HCT116 (cell line): ENCODE measurements at regions of chr1 and their contacts with region 1.

Region 1: GRCh38 chr1:241611063-241611462 is 29.1 kb downstream of the CHML start:
- DNase-seq: peak; percentile 56
- ATAC-seq: peak; percentile 91
- H3K4me3 ChIP-seq: no peak overlapping the region
- H3K27ac ChIP-seq: no peak overlapping the region
- H3K4me1 ChIP-seq: peaks cover 0 to 8% of the 10 kb centered on the region in 2 experiments; a peak in 1 of 4 replicates
- H3K27me3 ChIP-seq: no peaks in the 10 kb centered on the region
- CTCF ChIP-seq: peak; percentile 42 to 77 (median 74)
- POLR2A ChIP-seq: no peak
- RAD21 ChIP-seq: peak; percentile 89

Region 2: DNA sequence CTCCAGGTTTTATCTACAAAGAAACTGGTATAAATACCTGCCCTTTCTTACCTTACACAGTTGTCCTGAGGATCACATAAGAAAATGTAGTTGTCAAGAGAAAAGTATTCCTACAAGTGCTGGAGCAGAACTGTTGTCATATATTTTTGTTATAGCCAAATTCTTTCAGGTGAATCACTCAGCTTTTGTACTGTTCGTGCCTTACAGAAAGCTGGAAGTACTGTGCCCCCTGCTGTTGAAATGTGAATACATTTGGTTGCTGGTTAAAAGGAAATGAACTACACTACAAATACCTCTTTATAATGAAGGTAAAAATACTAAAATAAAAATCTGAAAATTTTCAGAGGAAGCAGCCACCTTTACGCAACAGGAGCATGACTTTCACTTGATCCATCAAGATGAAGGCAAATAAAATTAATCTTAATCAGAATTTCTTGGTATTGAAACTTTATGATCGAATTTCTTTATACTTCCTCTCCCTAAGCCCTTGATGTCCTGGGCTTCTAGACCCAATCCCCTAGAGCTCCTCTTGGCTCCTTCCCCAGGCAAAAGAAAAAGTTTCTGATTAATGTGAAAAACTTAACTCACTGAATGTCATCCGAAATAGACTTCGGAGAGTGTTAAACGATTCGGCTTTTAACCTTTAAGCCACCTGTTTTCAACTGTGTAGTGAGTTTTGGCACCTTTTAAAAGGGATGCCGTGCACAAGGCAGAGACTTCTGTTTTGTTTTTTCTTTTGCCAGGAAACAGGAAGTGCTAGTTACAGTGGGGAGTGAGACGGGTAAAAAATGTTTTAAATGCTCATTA is 16.6 kb after region 1 on chr1:
- CTCF ChIA-PET with region 1: interaction called, 11 read pairs
- POLR2A ChIA-PET with region 1: no interaction called
- RAD21 ChIA-PET with region 1: no interaction called
- intact Hi-C with region 1: no loop called
- DNase-seq: peak; percentile 47
- ATAC-seq: peak; percentile 74
- H3K4me3 ChIP-seq: no peak overlapping the region
- H3K27ac ChIP-seq: no peak overlapping the region
- H3K4me1 ChIP-seq: no peaks in the 10 kb centered on the region
- H3K27me3 ChIP-seq: no peaks in the 10 kb centered on the region
- CTCF ChIP-seq: peak; percentile 49 to 62 (median 57); a peak in 5 of 6 replicates
- POLR2A ChIP-seq: no peak
- RAD21 ChIP-seq: peak; percentile 66

Region 3: DNA sequence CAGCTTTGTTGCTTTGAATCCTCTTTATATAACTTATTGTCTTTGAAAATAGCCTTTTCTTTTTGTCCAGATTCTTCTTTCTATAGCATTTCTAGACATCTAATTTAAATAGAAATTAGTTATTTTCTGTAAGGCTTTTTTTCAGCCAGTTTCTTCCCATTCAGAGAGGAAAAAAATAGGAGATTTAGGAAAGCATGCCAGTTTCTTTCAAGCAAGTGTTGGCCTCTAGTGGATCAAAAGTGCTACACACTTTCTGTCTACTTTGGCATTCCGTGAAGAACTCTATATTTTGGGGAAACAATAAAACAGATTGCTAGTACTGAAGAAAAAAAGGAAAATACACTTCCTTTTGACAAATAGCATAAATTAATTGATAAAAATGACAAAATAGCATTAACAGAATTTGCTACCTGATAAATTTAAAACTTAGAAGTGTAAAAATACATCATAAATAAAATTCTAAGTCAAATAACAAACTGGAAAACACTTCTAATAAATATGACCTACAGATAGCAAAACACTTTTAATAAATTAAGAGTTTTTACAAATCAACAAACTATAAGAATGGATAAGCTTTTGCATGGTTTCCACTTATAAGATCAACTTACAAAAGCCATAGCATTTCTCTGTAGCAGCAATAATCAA is 223.8 kb after region 1 on chr1:
- CTCF ChIA-PET with region 1: interaction called, 10 read pairs
- POLR2A ChIA-PET with region 1: interaction called, 3 read pairs
- RAD21 ChIA-PET with region 1: no interaction called
- intact Hi-C with region 1: loop called (anchors 1 kb)
- DNase-seq: peak; percentile 26
- ATAC-seq: peak; percentile 67
- H3K4me3 ChIP-seq: no peak overlapping the region
- H3K27ac ChIP-seq: no peak overlapping the region
- H3K4me1 ChIP-seq: no peaks in the 10 kb centered on the region
- H3K27me3 ChIP-seq: no peaks in the 10 kb centered on the region
- CTCF ChIP-seq: peak; percentile 63 to 70 (median 66); a peak in 5 of 6 replicates
- POLR2A ChIP-seq: no peak
- RAD21 ChIP-seq: peak; percentile 79

Region 4: DNA sequence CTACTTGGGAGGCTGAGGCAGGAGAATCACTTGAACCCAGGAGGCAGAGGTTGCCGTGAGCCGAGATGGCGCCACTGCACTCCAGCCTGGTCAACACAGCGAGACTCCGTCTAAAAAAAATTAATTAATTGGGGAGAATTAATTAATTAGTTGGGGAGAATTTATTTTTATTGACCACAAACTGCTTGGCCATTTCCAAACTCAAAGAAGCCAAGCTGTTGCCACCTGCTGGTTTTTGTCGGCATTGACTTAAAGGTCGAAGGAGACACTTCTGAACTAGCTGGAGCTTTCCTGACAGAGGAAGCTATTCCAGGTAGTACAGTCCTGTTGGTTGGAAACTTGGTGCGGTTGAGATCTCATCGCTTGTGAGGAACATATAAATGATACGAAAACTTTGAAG is 374.7 kb after region 1 on chr1:
- CTCF ChIA-PET with region 1: interaction called, 15 read pairs
- POLR2A ChIA-PET with region 1: no interaction called
- RAD21 ChIA-PET with region 1: no interaction called
- intact Hi-C with region 1: no loop called
- DNase-seq: peak; percentile 38
- ATAC-seq: peak; percentile 82
- H3K4me3 ChIP-seq: no peak overlapping the region
- H3K27ac ChIP-seq: no peak overlapping the region
- H3K4me1 ChIP-seq: peaks cover 7 to 15% of the 10 kb centered on the region in 2 experiments; a peak in 3 of 4 replicates
- H3K27me3 ChIP-seq: no peaks in the 10 kb centered on the region
- CTCF ChIP-seq: peak; percentile 54 to 69 (median 56); a peak in 5 of 6 replicates
- POLR2A ChIP-seq: no peak
- RAD21 ChIP-seq: peak; percentile 63

Region 5: GRCh38 chr1:241998412-241998921 is 387.4 kb after region 1 on chr1:
- CTCF ChIA-PET with region 1: interaction called, 22 read pairs
- POLR2A ChIA-PET with region 1: no interaction called
- RAD21 ChIA-PET with region 1: no interaction called
- intact Hi-C with region 1: loop called (anchors 2 kb)
- DNase-seq: peak; percentile 89
- ATAC-seq: peak; percentile 97
- H3K4me3 ChIP-seq: peak overlapping the region; percentile 25 to 43; a peak in 3 of 4 replicates
- H3K27ac ChIP-seq: peak overlapping the region; percentile 1; the same call in 1 of the 2 replicates
- H3K4me1 ChIP-seq: peaks cover 0 to 10% of the 10 kb centered on the region in 2 experiments; a peak in 3 of 4 replicates
- H3K27me3 ChIP-seq: no peaks in the 10 kb centered on the region
- CTCF ChIP-seq: peak; percentile 80 to 98 (median 96)
- POLR2A ChIP-seq: no peak
- RAD21 ChIP-seq: peak; percentile 55

Region 6: DNA sequence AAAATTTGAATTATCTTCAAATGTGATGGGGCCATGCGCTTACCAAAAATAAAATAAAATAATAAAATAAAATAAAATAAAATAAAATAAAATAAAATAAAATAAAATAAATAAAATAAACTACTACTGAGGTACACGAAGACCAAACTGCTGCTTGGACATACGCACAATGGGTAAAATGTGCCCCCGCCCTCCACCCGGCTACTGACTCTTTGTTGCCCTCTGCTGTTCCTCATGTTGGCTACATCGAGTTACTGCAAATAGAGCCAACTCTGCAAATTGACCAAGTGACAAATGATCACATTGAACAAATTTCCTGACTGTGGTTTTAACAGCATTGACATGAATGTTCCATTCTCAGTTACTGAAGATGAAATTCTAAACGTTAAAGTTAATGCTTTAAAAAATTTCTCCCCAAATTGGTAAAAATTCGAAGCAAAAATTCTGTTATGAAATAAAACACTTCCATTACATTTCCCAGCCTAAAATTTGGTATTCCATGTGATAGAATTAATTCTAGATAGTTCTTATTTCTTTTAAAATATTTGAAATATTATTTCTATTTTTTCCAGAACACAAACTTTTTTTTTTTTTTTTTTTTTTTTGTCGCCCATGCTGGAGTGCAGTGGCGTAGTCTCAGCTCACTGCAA is 406.6 kb after region 1 on chr1:
- CTCF ChIA-PET with region 1: interaction called, 3 read pairs
- POLR2A ChIA-PET with region 1: no interaction called
- RAD21 ChIA-PET with region 1: no interaction called
- intact Hi-C with region 1: loop called (anchors 1 kb)
- DNase-seq: peak; percentile 41
- ATAC-seq: peak; percentile 83
- H3K4me3 ChIP-seq: no peak overlapping the region
- H3K27ac ChIP-seq: no peak overlapping the region
- H3K4me1 ChIP-seq: no peaks in the 10 kb centered on the region
- H3K27me3 ChIP-seq: no peaks in the 10 kb centered on the region
- CTCF ChIP-seq: peak; percentile 65 to 85 (median 76)
- POLR2A ChIP-seq: no peak
- RAD21 ChIP-seq: peak; percentile 75